ENCODE measurements at regions of chr1 and their contacts with region 1.

Region 1: DNA sequence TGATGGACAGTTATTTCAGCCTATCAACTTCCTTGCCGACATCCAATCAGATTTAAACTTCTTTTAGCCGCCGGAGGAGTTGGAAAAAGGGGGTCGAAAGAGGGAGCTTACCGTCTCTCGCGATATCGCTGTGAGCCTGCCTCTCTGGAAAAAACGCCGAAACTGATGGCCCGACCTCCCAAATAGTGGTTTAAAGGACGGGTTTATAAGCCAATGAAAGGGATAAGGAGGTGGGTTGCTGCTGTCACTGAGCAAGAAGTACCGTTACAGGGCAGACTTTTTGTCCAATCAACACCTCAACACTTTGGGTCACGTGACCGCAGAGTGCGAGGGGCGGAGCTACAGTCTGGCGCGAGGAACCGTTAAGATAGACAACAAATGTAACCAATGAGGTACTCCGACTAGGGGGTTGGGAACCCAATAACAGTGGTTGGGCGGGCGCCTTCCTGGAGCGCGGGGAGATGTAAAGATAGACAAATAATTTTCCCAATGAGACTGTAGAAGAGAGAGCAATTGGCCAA is at the start of gene RBM15:
- DNase-seq: peak; percentile 97
- ATAC-seq: peak; percentile 83
- H3K4me3 Mint-ChIP-seq: no peak within 1 kb of the TSS
- H3K27ac Mint-ChIP-seq: no peak within 1 kb of the TSS
- H3K4me1 Mint-ChIP-seq: peaks cover 48% of the 10 kb centered on the region
- H3K27me3 Mint-ChIP-seq: no peaks in the 10 kb centered on the region
- total RNA-seq, gene RBM15: 60.7 to 63.2 TPM

Region 2: GRCh38 chr1:108691942-108692723 is 1646.8 kb before region 1 on chr1 and contains the start of gene PRPF38B:
- CTCF ChIA-PET with region 1: no interaction called
- POLR2A ChIA-PET with region 1: no interaction called
- intact Hi-C with region 1: loop called in 1 of 2 experiments (anchors 2 kb)
- DNase-seq: peak; percentile 97
- ATAC-seq: peak; percentile 92
- H3K4me3 Mint-ChIP-seq: peak within 1 kb of the TSS; percentile 93
- H3K27ac Mint-ChIP-seq: peak within 1 kb of the TSS; percentile 95
- H3K4me1 Mint-ChIP-seq: peaks cover 38% of the 10 kb centered on the region
- H3K27me3 Mint-ChIP-seq: no peaks in the 10 kb centered on the region
- total RNA-seq, gene PRPF38B: 57.9 to 61.1 TPM

Region 3: GRCh38 chr1:109483672-109484518 is 855.1 kb before region 1 on chr1 and contains the start of gene ATXN7L2:
- CTCF ChIA-PET with region 1: interaction called, 3 read pairs
- POLR2A ChIA-PET with region 1: no interaction called
- intact Hi-C with region 1: loop called in 1 of 2 experiments (anchors 1 kb)
- DNase-seq: peak; percentile 96
- ATAC-seq: peak; percentile 79
- H3K4me3 Mint-ChIP-seq: peak within 1 kb of the TSS; percentile 88
- H3K27ac Mint-ChIP-seq: peak within 1 kb of the TSS; percentile 96
- H3K4me1 Mint-ChIP-seq: peaks cover 33% of the 10 kb centered on the region
- H3K27me3 Mint-ChIP-seq: no peaks in the 10 kb centered on the region
- total RNA-seq, gene ATXN7L2: 11.7 to 13.0 TPM

Region 4: DNA sequence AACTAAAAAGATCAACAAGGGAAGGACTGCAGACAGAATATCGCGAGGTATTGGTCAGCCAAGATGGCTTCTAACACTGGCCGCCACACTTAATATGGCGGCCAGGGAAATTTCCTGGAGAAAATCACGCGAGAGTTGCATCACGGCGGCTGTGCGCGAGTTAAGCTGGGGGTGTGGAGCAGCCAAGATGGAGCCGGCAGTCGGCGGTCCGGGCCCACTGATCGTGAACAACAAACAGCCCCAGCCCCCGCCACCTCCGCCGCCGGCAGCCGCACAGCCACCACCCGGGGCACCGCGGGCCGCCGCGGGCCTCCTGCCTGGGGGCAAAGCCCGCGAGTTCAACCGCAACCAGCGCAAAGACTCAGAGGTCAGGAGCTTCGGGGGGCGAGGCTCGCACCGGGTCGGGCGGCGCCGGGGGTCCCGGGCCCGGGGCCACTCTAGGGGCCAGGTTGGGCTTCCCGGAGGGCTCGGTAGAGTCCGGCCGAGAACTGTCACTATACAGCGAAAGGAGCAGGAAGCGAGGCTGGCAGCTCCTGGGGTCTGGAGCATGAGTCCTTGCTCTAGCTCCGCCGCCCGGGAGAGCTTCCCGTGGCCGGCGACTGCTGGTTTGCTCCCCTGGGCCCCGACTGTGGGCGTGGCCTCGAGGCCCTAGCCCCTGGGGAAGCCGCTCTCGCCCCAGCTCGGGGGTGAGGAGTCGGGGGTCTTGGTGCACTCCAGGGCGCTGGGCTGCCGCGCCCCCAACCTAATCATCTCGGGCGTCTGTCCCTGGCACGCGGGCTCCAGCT is 304.3 kb before region 1 on chr1 and contains the start of gene STRIP1:
- CTCF ChIA-PET with region 1: interaction called, 3 read pairs
- POLR2A ChIA-PET with region 1: interaction called, 4 read pairs
- intact Hi-C with region 1: loop called (anchors 1 kb)
- DNase-seq: peak; percentile 95
- ATAC-seq: peak; percentile 95
- H3K4me3 Mint-ChIP-seq: peak within 1 kb of the TSS; percentile 94
- H3K27ac Mint-ChIP-seq: peak within 1 kb of the TSS; percentile 95
- H3K4me1 Mint-ChIP-seq: peaks cover 47% of the 10 kb centered on the region
- H3K27me3 Mint-ChIP-seq: no peaks in the 10 kb centered on the region
- total RNA-seq, gene STRIP1: 20.7 to 21.5 TPM

Region 5: DNA sequence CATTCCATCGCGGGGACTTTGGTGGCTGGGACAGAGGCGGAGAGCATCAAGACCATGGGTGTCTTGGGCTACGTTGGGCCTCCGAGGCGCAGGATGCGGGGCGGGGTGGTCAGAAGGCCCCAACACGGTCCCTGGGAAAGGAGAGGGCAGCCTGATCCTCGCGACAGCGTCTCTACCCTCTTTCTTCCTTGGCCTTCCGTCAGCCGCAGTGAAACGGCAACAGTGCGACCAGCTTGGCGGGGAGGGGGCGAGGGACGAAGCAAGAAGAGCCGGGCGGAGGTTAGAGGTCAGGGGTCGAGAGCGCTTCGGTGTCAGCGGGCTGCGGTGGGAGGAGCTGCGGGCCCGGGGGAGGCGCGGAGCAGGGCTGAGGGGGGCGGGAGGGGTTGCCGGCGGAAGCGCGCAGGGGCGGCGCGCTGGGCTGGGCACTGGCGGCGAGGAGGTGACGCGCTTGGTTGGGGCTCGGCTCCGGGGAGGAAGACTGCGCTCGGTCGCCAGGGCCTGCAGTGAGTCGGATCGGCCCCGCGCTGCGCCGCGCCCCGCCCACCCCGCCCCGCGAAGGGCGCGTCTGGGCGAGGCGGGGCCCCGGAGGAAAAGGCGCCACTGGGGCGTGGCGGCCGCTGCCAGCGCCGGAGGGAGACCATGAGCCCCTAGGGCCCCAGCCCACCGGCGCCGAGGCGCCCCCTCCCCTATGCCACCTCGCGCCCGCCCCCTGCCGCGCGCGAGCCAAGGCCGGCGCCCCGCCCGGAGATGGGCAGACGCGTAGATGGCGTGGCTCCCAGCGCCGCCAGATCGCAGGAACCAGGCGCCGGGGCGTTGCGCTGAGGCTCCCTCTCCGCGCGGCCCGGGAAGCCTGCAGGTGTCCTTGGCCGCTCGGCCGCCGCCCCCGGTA is 129.0 kb before region 1 on chr1 and contains the start of gene KCNC4:
- CTCF ChIA-PET with region 1: interaction called, 137 read pairs
- POLR2A ChIA-PET with region 1: interaction called, 35 read pairs
- intact Hi-C with region 1: loop called (anchors 1 kb)
- DNase-seq: peak; percentile 95
- ATAC-seq: peak; percentile 88
- H3K4me3 Mint-ChIP-seq: peak within 1 kb of the TSS; percentile 82
- H3K27ac Mint-ChIP-seq: peak within 1 kb of the TSS; percentile 81
- H3K4me1 Mint-ChIP-seq: peaks cover 49% of the 10 kb centered on the region
- H3K27me3 Mint-ChIP-seq: no peaks in the 10 kb centered on the region
- total RNA-seq, gene KCNC4: 13.9 to 14.3 TPM

Region 6: GRCh38 chr1:110460253-110461220 is 121.6 kb after region 1 on chr1:
- CTCF ChIA-PET with region 1: interaction called, 4 read pairs
- POLR2A ChIA-PET with region 1: no interaction called
- intact Hi-C with region 1: loop called (anchors 2 to 5 kb)
- DNase-seq: peak; percentile 88
- ATAC-seq: peak; percentile 95
- H3K4me3 Mint-ChIP-seq: no peak overlapping the region
- H3K27ac Mint-ChIP-seq: no peak overlapping the region
- H3K4me1 Mint-ChIP-seq: no peaks in the 10 kb centered on the region
- H3K27me3 Mint-ChIP-seq: no peaks in the 10 kb centered on the region

Region 7: GRCh38 chr1:110696818-110697217 is 357.9 kb after region 1 on chr1:
- CTCF ChIA-PET with region 1: no interaction called
- POLR2A ChIA-PET with region 1: no interaction called
- intact Hi-C with region 1: no loop called
- DNase-seq: no peak
- ATAC-seq: no peak
- H3K4me3 Mint-ChIP-seq: no peak overlapping the region
- H3K27ac Mint-ChIP-seq: no peak overlapping the region
- H3K4me1 Mint-ChIP-seq: no peaks in the 10 kb centered on the region
- H3K27me3 Mint-ChIP-seq: no peaks in the 10 kb centered on the region

Region 8: GRCh38 chr1:110879758-110880606 is 541.0 kb after region 1 on chr1:
- CTCF ChIA-PET with region 1: no interaction called
- POLR2A ChIA-PET with region 1: interaction called, 4 read pairs
- intact Hi-C with region 1: loop called in 1 of 2 experiments (anchors 2 kb)
- DNase-seq: peak; percentile 77
- ATAC-seq: peak; percentile 66
- H3K4me3 Mint-ChIP-seq: peak overlapping the region; percentile 85
- H3K27ac Mint-ChIP-seq: peak overlapping the region; percentile 100
- H3K4me1 Mint-ChIP-seq: peaks cover 63% of the 10 kb centered on the region
- H3K27me3 Mint-ChIP-seq: no peaks in the 10 kb centered on the region